ENCODE measurements at regions of chr12 and their contacts with region 1.

Region 1: DNA sequence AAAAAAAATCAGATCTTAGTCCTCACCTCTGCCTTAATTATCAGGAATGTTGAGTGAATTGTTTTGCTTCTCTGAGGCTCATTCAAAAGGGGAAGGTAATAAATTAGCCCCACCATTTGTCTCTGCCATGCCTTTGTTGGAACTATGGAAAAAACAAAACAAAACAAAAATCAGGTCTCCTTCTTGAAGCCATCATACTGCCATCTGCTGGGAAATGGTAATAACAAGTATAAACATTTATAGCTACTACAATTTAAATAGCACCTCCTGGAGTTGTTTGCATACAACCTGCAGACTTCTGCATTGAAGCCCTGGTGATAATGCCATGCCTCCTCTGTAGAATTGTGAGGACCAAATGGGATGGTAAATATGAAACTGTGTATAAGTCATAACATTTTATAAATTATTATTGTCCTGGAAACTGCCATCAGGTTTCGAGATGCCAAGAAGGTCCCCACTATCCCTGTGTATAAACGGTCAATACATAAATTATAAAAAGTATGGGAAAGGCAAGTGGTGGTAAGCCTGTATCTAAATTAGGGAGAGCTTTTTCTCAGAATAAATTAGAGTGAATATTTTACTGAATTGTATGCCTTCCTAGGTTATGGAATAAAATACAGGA is 87.2 kb upstream of the FGD4 start:
- DNase-seq: peak; percentile 45
- ATAC-seq: peak; percentile 77
- H3K4me3 ChIP-seq: no peak overlapping the region
- H3K27ac ChIP-seq: no peak overlapping the region
- H3K4me1 ChIP-seq: no peaks in the 10 kb centered on the region
- H3K27me3 ChIP-seq: no peaks in the 10 kb centered on the region
- CTCF ChIP-seq: peak; percentile 80; the same call in 1 of the 2 replicates

Region 2: DNA sequence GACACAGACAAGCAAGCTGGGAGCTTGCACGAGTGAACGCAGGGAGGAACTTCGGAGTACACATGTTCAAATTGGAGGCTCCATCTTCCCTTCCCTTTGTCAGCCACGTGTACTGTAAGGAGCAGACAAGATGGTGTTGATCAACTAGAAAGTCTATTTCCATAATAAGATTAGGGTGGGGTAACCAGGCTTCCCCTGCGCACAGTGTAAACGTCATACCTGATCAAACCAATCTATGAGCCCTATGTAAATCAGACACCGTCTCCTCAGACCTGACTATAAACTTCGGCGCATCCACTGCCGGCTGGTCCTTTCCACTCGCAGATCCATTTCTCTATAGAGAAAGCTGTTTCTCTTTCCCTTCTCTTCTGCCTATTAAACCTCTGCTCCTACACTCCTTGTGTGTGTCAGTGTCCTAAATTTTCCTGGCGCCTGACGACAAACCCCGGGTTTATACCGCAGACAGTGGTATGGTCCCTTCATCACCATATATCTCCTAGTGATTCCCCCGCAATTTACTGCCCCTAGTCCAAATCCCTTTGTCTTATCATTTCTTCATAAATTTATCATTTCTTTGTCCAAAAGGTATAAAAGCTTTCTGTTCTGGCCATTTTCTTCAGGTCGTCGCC is 660.2 kb before region 1 on chr12:
- CTCF ChIA-PET with region 1: interaction called, 26 read pairs
- POLR2A ChIA-PET with region 1: no interaction called
- in situ Hi-C with region 1: no loop called
- intact Hi-C with region 1: loop called (anchors 2 kb)
- DNase-seq: no peak
- ATAC-seq: no peak
- H3K4me3 ChIP-seq: peak overlapping the region in 1 of 2 experiments; percentile 27; a peak in 1 of 4 replicates
- H3K27ac ChIP-seq: peak overlapping the region; percentile 72; the same call in 1 of the 2 replicates
- H3K4me1 ChIP-seq: 0 out of 2 replicates have a peak, but pooled peaks cover 3% of the 10 kb centered on the region
- H3K27me3 ChIP-seq: no peaks in the 10 kb centered on the region
- CTCF ChIP-seq: no peak

Region 3: DNA sequence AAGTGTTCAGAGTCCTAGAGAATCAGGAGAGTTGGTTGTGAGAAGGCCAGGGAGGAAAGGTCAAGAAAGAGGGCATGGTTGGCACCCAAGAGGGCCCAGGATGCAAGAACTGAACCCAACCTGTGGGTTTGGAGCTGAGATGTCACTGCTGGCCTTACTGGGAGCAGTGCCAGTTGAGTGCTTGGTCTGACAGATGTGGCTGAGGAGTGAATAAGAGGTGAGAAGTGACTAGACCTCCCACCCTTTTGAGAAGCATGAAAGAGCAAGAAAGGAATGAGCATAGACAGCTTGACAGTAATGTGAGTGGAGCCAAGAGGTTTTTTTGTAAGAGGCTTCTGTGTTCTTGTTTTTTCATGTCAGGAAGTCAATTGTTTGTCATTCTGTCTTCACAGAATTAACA is 182.5 kb after region 1 on chr12:
- CTCF ChIA-PET with region 1: no interaction called
- POLR2A ChIA-PET with region 1: no interaction called
- in situ Hi-C with region 1: no loop called
- intact Hi-C with region 1: no loop called
- DNase-seq: no peak
- ATAC-seq: no peak
- H3K4me3 ChIP-seq: no peak overlapping the region
- H3K27ac ChIP-seq: no peak overlapping the region
- H3K4me1 ChIP-seq: no peaks in the 10 kb centered on the region
- H3K27me3 ChIP-seq: no peaks in the 10 kb centered on the region
- CTCF ChIP-seq: no peak

Region 4: GRCh38 chr12:32641287-32641901 is 329.2 kb after region 1 on chr12:
- CTCF ChIA-PET with region 1: no interaction called
- POLR2A ChIA-PET with region 1: no interaction called
- in situ Hi-C with region 1: no loop called
- intact Hi-C with region 1: no loop called
- DNase-seq: no peak
- ATAC-seq: no peak
- H3K4me3 ChIP-seq: no peak overlapping the region
- H3K27ac ChIP-seq: no peak overlapping the region
- H3K4me1 ChIP-seq: no peaks in the 10 kb centered on the region
- H3K27me3 ChIP-seq: no peaks in the 10 kb centered on the region
- CTCF ChIP-seq: no peak